ENCODE measurements at regions of chr12 and their contacts with region 1.

Region 1: GRCh38 chr12:823028-823698 is 70.8 kb downstream of the WNK1 start:
- DNase-seq: no peak
- H3K4me3 ChIP-seq: no peak overlapping the region
- CTCF ChIP-seq: no peak

Region 2: DNA sequence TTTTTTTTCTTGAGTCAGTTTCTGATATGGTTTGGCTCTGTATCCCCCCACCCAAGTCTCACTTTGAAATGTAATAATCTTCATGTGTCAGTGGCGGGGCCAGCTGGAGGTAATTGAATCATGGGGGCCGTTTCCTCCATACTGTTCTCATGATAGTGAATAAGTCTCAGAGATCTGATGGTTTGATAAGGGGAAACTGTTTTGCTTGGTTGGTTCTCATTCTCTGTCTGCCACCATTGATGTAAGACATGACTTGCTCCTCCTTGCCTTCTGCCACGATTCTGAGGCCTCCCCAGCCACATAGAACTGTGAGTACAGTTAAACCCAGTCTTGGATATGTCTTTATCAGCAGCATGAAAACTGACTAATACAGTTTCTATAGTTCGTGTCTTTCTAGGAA is 27.9 kb before region 1 on chr12:
- CTCF ChIA-PET with region 1: interaction called, 130 read pairs
- POLR2A ChIA-PET with region 1: no interaction called
- DNase-seq: no peak
- H3K4me3 ChIP-seq: no peak overlapping the region
- CTCF ChIP-seq: no peak

Region 3: DNA sequence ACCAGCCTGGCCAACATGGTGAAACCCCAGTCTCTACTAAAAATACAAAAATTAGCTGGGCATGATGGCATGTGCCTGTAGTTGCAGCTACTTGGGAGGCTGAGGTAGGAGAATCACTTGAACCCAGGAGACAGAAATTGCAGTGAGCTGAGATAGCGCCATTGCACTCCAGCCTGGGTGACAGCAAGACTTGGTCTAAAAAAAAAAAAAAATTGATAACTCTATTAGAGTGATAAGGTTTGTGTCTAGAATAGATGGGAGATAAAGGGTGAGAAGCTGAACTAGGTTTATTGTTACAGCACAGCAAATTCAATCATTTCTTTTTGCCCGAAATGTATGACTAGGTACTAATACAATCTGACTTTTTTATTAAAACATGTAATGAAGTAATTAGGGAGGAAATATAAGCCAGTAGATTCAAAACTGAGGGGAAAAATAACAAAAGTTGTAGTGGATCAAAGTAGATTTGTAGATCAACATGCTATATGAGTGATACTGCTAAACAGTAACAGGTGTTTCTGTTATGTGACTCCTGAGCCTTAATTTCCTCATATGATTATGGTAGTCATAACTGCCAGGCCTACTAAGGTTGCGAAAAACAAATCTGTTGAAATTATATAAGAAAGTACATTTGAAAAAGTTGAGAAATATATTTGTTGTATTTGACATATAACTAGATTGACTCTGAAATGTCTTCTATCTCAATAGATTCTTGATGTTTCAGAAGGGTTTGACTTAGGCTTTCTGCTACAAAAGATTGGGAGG is 12.8 kb after region 1 on chr12:
- CTCF ChIA-PET with region 1: interaction called, 46 read pairs
- POLR2A ChIA-PET with region 1: no interaction called
- DNase-seq: no peak
- H3K4me3 ChIP-seq: no peak overlapping the region
- CTCF ChIP-seq: no peak

Region 4: GRCh38 chr12:843609-844008 is 20.4 kb after region 1 on chr12:
- CTCF ChIA-PET with region 1: interaction called, 37 read pairs
- POLR2A ChIA-PET with region 1: no interaction called
- DNase-seq: peak; percentile 29
- H3K4me3 ChIP-seq: no peak overlapping the region
- CTCF ChIP-seq: no peak

Region 5: DNA sequence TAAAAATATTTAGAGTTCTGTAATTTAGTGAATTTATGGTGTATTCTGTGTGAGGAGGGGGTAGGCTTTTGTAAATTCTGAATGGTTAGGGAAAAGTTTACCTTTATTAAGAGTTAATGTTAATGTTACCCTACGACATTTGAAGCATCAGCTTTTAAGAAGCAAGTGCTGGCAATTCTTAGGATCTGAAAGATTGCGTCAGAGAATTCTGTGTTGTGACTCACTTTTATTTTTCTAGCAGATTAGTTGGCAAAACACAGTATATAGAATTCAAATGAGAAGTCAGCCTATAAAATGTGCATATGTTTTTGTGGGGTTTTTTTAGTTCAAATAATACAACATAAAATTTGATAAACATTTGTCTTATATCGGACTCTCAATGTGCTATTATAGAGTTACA is 28.8 kb after region 1 on chr12:
- CTCF ChIA-PET with region 1: interaction called, 35 read pairs
- POLR2A ChIA-PET with region 1: no interaction called
- DNase-seq: no peak
- H3K4me3 ChIP-seq: no peak overlapping the region
- CTCF ChIP-seq: no peak

Region 6: DNA sequence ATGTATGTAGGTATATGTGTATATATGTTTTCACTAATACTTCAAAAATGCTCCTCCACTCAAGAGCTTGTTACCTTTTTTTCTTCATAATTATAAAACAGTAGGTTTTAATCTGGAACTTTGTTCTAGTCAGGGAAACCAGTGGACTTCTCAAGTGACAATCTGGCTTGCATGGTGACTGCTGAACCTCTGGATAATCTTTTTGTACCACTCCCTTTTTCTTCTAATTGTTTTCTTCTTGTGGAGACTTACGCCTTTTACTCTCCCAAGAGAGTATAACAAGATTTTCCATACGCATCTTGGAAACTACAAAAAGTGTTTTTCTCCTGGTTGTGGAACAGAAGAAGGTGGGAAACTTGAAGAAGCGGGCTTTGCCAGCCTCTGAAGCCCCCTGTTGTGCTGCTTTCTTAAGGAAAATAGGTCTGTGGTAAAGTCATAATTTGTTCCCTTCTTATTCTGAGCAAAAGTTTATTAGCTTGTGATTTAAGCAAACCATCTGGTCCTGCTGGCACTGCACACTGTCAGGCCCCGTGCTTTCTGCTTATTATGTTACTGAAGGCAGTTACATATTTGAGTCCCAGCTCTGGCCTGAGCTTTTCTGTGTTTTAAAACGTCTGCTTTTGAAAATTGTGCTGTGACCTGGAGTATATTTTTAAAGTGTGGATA is 459.6 kb after region 1 on chr12:
- CTCF ChIA-PET with region 1: no interaction called
- POLR2A ChIA-PET with region 1: no interaction called
- DNase-seq: no peak
- H3K4me3 ChIP-seq: no peak overlapping the region
- CTCF ChIP-seq: no peak